Right ventricle myocardium inferior (tissue), 1 donor: ENCODE measurements at regions of chr7 and their contacts with region 1.

Region 1: DNA sequence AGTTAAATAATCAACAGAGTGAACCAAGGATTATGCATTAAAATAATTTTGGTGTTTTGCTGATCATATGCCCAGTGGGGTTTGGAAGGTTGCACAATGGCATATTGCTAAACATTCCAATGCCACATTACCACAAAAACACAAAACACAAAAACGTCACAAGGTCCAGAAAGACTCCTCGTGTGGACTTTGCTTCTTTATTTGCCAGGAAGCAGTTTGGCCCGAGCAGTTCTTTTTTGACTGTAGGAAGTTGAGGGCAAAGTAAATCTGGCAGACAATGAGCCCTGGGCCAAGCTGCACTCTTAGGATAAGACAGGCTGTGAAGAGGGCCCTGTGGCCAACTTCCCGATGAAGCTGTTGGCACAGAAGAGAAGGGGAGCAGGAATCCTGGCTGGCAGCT is 39.2 kb upstream of the SLC35B4 start:
- DNase-seq: no peak
- ATAC-seq: peak; percentile 77

Region 2: DNA sequence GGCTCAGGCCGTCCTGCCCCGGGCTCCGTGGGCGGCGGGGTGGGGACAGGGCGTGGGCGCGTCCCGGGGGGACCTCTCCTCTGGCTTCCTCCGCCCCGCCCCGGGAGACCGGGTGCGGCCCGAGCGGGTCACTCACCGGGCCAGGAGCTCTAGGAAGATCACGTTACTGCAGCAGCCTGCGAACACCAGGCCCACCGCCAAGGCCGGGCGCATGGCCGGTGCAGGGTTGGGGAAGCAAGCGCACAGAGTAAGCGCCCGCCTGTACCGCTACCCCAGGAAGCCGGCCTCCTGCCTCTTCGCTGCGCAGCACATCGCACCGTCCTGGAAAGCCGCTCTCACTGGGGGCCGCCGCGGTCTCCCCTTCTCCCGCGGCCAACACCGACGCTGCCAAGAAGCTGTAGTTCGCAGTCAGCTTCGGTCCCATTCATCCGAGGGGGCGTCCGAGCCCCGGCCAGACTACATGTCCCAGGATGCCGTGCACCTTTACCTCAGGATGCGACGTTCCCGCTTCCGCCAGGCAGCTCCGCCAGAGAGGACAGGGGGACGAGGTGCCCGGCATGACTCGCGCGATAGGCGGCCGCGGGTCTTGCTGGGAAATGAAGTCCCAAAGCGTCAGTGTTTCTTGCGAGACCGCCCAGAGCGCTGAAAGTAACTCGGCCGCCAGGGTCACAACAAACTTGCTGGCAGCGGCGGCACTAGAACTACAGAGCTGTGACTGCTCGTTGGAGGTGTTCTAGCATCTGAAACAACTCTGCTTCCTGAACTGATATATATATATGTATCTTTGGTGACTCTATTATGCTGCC is 39.2 kb before region 1 on chr7 and contains the start of gene SLC35B4:
- intact Hi-C with region 1: loop called (anchors 1 kb)
- DNase-seq: peak; percentile 98
- ATAC-seq: peak; percentile 100
- total RNA-seq, gene SLC35B4: 5.6 TPM

Region 3: DNA sequence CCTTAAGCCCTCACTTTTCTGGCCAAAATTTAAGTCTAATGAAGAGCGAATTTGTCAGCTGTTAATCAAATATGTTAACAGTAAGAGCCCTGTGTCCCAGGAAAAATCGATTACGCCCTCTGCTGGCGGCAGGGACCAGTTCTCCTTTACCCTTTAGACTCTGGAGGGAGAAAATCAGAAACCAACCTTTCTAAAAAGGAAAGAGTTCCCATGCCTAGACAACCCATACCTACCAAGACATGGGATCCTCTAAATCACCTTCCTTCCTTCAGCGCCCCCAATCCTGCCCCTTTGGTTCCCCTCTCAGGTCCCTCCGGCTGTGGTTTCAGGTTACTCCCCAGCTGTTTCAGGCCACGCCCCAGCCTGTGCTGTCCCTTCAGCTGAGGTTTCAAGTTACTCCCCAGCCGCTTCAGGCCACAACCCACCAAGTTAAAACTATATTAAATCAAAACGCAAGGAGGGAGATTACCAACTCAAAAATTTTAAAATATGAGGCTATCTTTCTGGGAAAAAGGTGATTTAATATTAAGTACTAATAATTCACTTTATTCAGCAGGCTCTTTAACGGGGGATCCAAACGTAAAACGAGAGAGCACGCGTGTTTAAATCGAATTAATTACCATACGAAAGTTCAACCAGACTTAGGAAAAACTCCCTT is 191.6 kb after region 1 on chr7:
- intact Hi-C with region 1: no loop called
- DNase-seq: no peak
- ATAC-seq: peak; percentile 95